Upper lobe of right lung (tissue), 1 donor: ENCODE measurements at regions of chr4 and their contacts with region 1.

Region 1: GRCh38 chr4:21512353-21512752 is 436.2 kb downstream of the KCNIP4 start:
- DNase-seq: no peak
- ATAC-seq: no peak
- H3K4me3 ChIP-seq: no peak overlapping the region
- H3K27ac ChIP-seq: no peak overlapping the region
- H3K4me1 ChIP-seq: no peaks in the 10 kb centered on the region
- H3K27me3 ChIP-seq: no peaks in the 10 kb centered on the region
- CTCF ChIP-seq: peak; percentile 30

Region 2: DNA sequence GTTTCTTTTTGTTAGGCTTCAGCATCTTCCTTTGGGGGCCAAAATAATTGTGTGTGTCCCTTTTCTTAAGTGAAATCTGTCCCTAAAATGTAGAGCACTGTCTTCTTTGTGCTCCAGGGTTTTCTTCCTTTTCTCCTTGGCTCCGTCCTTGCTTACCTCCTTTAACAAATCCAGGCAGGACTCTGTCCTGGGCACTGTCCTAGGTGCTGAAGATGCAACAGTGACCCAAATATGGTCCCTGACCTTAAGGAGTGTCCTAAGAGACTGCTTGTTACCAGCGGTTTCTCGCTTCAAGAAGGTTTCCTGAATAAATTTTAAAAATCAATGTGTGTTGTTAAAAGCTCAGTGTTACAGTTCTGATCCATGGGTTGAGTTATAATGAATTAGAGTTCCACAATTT is 35.6 kb before region 1 on chr4:
- intact Hi-C with region 1: no loop called
- DNase-seq: no peak
- ATAC-seq: no peak
- H3K4me3 ChIP-seq: no peak overlapping the region
- H3K27ac ChIP-seq: no peak overlapping the region
- H3K4me1 ChIP-seq: no peaks in the 10 kb centered on the region
- H3K27me3 ChIP-seq: no peaks in the 10 kb centered on the region
- CTCF ChIP-seq: no peak

Region 3: GRCh38 chr4:21765810-21766407 is 253.6 kb after region 1 on chr4:
- intact Hi-C with region 1: loop called (anchors 10 kb)
- DNase-seq: no peak
- ATAC-seq: peak; percentile 87
- H3K4me3 ChIP-seq: no peak overlapping the region
- H3K27ac ChIP-seq: no peak overlapping the region
- H3K4me1 ChIP-seq: no peaks in the 10 kb centered on the region
- H3K27me3 ChIP-seq: no peaks in the 10 kb centered on the region
- CTCF ChIP-seq: peak; percentile 82